Head of caudate nucleus (tissue), 42 donors: ENCODE measurements at regions of chr7 and their contacts with region 1.

Region 1: DNA sequence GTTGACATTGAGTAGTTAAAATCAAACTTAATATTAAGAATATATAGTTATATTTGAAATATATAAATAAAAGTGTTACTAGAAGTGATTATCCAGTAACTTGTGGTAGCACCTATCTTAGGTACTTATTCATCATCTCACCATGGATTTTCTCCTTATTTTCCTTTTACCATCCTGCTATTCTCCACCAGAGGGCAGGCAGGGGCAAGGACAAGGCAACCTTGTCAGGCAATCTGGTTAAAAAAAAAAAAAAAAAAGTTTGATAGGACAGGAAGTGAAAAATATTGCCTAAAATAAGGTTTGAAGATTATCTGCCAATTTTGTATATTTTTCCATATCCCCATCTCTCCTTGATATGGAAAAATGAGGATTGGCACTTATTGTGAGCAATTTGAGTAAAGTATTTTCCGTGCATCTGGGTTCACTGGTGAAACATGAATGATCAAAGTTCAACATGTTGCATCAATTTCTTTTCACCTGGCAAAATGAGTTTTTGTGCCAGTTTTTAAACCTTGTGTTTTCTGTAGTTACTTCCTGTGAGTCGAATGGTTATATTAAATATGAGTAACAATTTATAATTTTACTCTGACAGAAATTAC is 256.7 kb downstream of the AGMO start:
- DNase-seq: peak in 37 of 42 donors; percentile 8 to 79 (median 51)

Region 2: DNA sequence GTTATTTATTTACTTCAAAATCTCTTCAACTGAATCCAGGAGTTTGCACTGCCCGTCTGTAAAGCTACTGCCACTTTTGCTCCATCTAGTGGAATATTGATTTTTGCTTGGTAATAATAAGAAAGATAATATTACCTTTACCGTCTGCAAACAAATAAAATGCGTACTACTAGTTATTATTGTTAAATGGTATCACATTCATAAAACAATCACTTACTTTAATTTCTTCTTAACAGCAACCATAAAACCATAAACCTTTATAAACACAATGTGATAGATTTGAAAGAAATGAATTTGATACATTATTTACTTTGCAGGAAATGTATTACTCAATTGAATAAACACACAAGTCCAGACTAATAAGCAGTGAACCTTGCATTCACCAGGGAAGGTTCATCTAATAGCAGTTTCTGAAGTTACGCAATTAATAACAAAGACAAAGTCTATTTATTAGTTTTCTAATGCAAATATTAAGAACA is 250.3 kb after region 1 on chr7:
- intact Hi-C with region 1: loop called (anchors 10 kb)
- DNase-seq: peak in 2 of 42 donors; percentile 16 to 32